Activated T-helper 2 cell treated with anti-CD3 and anti-CD28 coated beads, Interferon-gamma antibody, Interleukin-2, Interleukin-4, amounts not matched to agents 10 μg/mL and 5 μg/mL and 100 μg/mL, durations not matched to agents 14 hours and 24 hours and 36 hours (primary cell): ENCODE measurements at regions of chr2 and their contacts with region 1.

Region 1: GRCh38 chr2:191740016-191740419 is 62.1 kb downstream of the NABP1 start:
- DNase-seq: peak; percentile 52
- H3K4me3 Mint-ChIP-seq: no peak overlapping the region
- H3K27ac Mint-ChIP-seq: peak overlapping the region; percentile 56
- H3K4me1 Mint-ChIP-seq: peaks cover 8% of the 10 kb centered on the region
- H3K27me3 Mint-ChIP-seq: peaks cover 10% of the 10 kb centered on the region

Region 2: DNA sequence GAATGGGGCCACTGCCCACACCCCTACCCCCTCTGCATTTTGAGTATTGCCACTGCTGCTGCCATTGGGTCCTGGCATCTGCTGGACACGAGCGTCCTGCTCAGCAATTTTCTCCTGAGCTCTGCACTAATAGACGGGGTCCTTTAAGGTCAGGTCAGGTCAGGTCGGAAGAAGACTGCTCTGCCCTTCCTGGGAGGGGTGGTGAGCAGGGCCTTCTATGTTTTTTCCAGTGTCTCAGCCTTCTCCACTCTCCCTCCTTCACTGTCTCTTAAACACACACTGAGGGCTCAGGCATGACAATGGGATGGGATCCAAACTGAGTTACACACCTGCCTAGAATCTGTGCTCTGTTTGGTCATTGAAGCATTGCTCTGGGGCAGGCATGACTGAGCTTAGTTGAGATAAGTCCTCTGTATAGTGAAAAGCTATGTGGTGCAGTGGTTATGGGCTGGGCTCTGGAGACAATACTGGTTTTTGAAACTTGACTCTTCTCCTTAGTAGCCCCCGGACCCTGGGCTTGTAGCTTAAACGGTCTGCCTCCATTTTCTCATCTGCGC is 484.2 kb before region 1 on chr2:
- intact Hi-C with region 1: no loop called
- DNase-seq: no peak
- H3K4me3 Mint-ChIP-seq: no peak overlapping the region
- H3K27ac Mint-ChIP-seq: no peak overlapping the region
- H3K4me1 Mint-ChIP-seq: no peaks in the 10 kb centered on the region
- H3K27me3 Mint-ChIP-seq: peaks cover 2% of the 10 kb centered on the region

Region 3: DNA sequence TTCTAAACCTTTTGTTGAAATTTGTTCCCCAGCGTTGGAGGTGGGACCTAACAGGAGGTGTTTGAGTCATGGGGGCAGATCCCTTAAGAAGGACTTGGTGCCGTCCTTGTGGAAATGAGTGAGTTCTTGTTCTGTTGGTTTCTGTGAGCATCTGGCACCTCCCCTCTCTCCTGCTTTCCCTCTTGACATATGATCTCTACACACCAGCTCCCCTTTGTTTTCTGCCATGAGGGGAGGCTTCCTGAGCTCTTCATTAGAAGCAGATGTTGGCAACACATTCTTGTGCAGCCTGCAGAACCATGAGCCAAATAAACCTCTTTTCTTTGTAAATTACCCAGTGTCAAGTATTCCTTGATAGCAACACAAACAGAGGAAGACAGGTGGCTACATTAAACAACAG is 38.3 kb before region 1 on chr2:
- intact Hi-C with region 1: loop called (anchors 5 kb)
- DNase-seq: no peak
- H3K4me3 Mint-ChIP-seq: no peak overlapping the region
- H3K27ac Mint-ChIP-seq: no peak overlapping the region
- H3K4me1 Mint-ChIP-seq: no peaks in the 10 kb centered on the region
- H3K27me3 Mint-ChIP-seq: no peaks in the 10 kb centered on the region